ENCODE measurements at regions of chr11 and their contacts with region 1.

Region 1: GRCh38 chr11:62905927-62906531 is 15.1 kb downstream of the CHRM1 start:
- DNase-seq: peak; percentile 68
- H3K4me3 Mint-ChIP-seq: no peak overlapping the region
- H3K27ac Mint-ChIP-seq: no peak overlapping the region
- H3K4me1 Mint-ChIP-seq: peaks cover 26% of the 10 kb centered on the region
- H3K27me3 Mint-ChIP-seq: peaks cover 13% of the 10 kb centered on the region

Region 2: GRCh38 chr11:62013591-62014476 is 892.2 kb before region 1 on chr11:
- intact Hi-C with region 1: no loop called
- DNase-seq: no peak
- H3K4me3 Mint-ChIP-seq: no peak overlapping the region
- H3K27ac Mint-ChIP-seq: no peak overlapping the region
- H3K4me1 Mint-ChIP-seq: no peaks in the 10 kb centered on the region
- H3K27me3 Mint-ChIP-seq: peaks cover 2% of the 10 kb centered on the region

Region 3: GRCh38 chr11:62974848-62975522 is 69.0 kb after region 1 on chr11:
- intact Hi-C with region 1: loop called (anchors 1 kb)
- DNase-seq: no peak
- H3K4me3 Mint-ChIP-seq: no peak overlapping the region
- H3K27ac Mint-ChIP-seq: no peak overlapping the region
- H3K4me1 Mint-ChIP-seq: no peaks in the 10 kb centered on the region
- H3K27me3 Mint-ChIP-seq: peaks cover 3% of the 10 kb centered on the region

Region 4: DNA sequence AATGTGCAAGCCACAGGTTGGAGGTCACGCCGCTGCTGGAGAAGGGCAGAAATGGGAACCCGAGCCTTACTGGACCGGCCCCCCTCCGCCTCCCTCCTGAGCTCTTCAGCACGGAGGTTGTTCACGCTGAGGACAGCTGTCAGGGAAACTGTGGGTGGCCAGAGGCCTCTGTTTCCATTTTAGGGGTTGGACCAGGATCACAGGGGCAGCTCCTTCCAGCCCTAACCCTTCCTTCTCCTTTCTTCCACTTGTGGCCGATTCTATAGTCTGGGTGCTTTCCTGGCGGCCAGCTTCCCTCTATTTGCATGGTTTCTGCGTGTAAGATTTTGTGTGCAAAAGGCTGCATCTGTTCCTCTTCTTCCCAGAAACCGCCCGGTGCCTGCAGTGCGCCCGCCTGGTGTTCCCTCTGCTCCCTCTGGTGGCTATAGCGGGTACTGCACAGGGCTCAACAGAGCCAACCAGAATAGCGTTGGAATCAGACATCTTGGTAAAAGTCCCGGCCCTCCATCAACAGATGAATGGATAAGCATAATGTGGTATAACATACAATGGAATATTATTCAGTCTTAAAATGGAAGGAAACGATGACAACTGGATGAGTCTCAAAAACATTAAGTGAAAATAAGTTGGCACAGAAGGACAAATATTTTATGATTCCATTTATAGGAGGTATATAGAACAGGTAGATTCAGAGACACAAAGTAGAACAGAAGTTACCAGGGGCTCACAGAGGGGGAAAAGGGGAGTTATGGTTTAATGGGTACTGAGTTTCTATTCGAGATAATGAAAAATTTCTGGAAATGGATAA is 118.0 kb after region 1 on chr11:
- intact Hi-C with region 1: loop called (anchors 1 kb)
- DNase-seq: peak; percentile 67
- H3K4me3 Mint-ChIP-seq: no peak overlapping the region
- H3K27ac Mint-ChIP-seq: no peak overlapping the region
- H3K4me1 Mint-ChIP-seq: peaks cover 11% of the 10 kb centered on the region
- H3K27me3 Mint-ChIP-seq: peaks cover 5% of the 10 kb centered on the region

Region 5: DNA sequence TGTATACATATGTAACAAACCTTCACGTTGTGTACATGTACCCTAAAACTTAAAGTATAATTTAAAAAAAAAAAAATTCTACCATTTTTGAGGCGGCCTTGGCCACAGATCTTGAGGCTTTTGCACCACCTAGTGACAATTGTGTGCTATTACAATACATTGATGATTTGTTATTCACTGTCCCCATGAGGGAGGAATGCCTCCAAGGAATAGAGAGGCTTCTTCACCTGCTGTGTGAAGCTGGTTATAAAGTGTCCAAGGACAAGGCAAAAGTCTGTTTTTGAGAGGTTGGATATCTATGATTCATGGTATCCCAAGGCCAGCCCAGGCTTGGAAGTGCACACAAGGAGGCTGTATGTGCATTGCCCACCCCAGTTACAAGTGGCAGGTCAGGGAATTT is 306.7 kb after region 1 on chr11:
- intact Hi-C with region 1: loop called (anchors 1 kb)
- DNase-seq: peak; percentile 2
- H3K4me3 Mint-ChIP-seq: no peak overlapping the region
- H3K27ac Mint-ChIP-seq: no peak overlapping the region
- H3K4me1 Mint-ChIP-seq: no peaks in the 10 kb centered on the region
- H3K27me3 Mint-ChIP-seq: peaks cover under 1% of the 10 kb centered on the region

Region 6: DNA sequence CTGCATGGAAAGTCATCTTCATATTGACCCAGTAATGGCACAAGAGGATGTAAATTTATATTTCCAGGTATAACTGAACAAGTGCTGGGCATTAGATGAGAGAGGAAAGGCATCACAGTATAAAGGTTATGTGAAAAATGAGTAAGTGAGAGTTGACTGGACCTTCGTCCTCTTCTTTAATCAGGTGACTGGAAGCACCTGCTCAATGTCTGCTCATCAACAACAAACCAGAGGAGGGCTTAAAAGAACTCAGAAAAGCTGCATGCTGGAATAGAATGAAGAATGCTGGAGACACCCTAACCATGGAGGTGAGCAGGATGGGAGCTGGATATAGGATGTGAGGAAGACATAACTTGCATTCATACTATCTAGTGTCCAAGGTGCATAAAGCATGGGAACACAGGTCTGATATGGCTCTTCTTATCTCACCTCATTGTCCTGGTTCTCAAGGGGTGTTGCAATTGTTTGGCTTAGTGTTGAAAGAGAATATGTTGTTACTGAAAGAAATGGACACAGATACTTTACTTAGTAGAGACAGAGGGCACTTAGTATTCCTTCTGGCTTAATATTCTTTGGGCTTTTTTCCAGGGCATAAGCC is 456.3 kb after region 1 on chr11:
- intact Hi-C with region 1: no loop called
- DNase-seq: no peak
- H3K4me3 Mint-ChIP-seq: no peak overlapping the region
- H3K27ac Mint-ChIP-seq: no peak overlapping the region
- H3K4me1 Mint-ChIP-seq: no peaks in the 10 kb centered on the region
- H3K27me3 Mint-ChIP-seq: peaks cover 4% of the 10 kb centered on the region

Measured in activated T-helper 1 cell treated with anti-CD3 and anti-CD28 coated beads, Interleukin-12 subunit alpha, Interleukin-12 subunit beta, Interleukin-2, Interleukin-4 antibody, amounts not matched to agents 30 ng/mL and 10 ng/mL and 1 ng/mL, durations not matched to agents 14 hours and 24 hours and 36 hours (primary cell).